Ascending aorta (tissue), 2 donors: ENCODE measurements at regions of chr13 and their contacts with region 1.

Region 1: DNA sequence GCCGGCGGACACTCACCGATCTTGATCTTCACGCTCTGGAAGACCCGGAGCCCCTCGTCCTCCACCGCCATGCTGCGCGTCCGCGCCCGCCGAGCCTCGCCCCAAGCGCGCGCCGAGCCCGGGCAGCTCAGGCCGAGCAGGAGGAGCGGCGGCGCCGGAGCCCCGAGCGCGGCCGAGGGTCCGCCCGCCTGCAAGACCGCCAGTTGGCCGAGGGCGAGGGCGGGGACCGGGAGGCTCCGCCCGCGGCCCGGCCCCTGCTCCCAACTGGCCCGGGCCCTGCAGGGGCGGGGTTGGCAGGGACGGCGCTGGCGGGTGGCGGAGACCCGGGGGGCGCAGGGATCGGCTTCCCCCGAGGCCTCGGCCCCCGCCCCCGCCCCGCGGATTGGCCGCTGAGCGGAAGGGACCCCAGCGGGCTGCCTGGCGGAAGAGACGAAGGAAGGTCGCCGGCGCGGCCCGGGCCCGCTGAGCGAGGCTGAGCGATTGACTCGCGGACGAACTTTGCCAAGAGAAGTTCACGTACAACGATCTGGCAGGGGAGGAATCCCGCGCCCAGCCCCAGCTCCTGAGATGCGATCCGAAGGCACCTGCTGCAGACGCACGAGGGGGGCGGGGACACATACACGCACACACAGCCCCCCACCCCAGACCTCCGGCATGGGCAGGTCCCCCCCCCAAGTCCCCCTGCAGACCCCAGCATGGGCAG is at the start of gene RASA3:
- DNase-seq: peak in 1 of 2 donors; percentile 88
- H3K4me3 ChIP-seq: peak within 1 kb of the TSS; percentile 72 to 96
- H3K27ac ChIP-seq: peak within 1 kb of the TSS; percentile 83 to 88
- H3K4me1 ChIP-seq: peaks cover 14 to 25% of the 10 kb centered on the region in 2 donors
- H3K27me3 ChIP-seq: no peaks in the 10 kb centered on the region
- CTCF ChIP-seq: no peak
- total RNA-seq, gene RASA3: 30.7 TPM

Region 2: GRCh38 chr13:113951246-113951999 is 181.1 kb before region 1 on chr13:
- intact Hi-C with region 1: no loop called
- DNase-seq: peak; percentile 30 to 92
- H3K4me3 ChIP-seq: peak overlapping the region in 1 of 2 donors; percentile 41
- H3K27ac ChIP-seq: no peak overlapping the region
- H3K4me1 ChIP-seq: peaks cover 3 to 8% of the 10 kb centered on the region in 2 donors
- H3K27me3 ChIP-seq: no peaks in the 10 kb centered on the region
- CTCF ChIP-seq: peak; percentile 89 to 93 (median 91)

Region 3: GRCh38 chr13:113976711-113977684 is 155.6 kb before region 1 on chr13:
- intact Hi-C with region 1: loop called (anchors 10 kb)
- DNase-seq: no peak
- H3K4me3 ChIP-seq: no peak overlapping the region
- H3K27ac ChIP-seq: peak overlapping the region; percentile 34 to 75
- H3K4me1 ChIP-seq: peaks cover 8 to 13% of the 10 kb centered on the region in 2 donors
- H3K27me3 ChIP-seq: no peaks in the 10 kb centered on the region
- CTCF ChIP-seq: no peak

Region 4: DNA sequence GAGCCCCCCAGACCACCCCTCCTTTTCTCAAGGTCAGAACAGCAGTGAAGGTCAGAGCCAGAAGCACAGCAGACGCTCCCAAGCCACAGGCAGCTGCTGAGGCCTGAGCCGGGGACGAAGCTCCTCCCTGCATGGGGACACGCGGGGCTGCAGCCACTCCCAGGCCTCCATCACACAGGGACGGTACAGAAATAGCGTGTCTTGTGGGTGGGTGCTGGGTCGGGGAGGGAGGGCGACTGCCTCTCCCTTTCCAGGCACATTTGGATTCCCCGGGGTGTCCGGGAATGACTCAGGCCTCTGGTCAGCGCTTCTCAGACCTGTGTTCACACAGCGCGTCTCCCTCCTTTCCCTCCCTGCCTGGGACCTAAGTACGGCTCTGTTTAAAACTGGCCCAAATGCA is 33.4 kb before region 1 on chr13:
- intact Hi-C with region 1: loop called (anchors 1 kb)
- DNase-seq: peak; percentile 79 to 94
- H3K4me3 ChIP-seq: peak overlapping the region in 1 of 2 donors; percentile 25
- H3K27ac ChIP-seq: peak overlapping the region; percentile 43 to 70
- H3K4me1 ChIP-seq: peaks cover 10 to 24% of the 10 kb centered on the region in 2 donors
- H3K27me3 ChIP-seq: no peaks in the 10 kb centered on the region
- CTCF ChIP-seq: no peak